AG04450 (cell line): ENCODE measurements at regions of chr3 and their contacts with region 1.

Region 1: DNA sequence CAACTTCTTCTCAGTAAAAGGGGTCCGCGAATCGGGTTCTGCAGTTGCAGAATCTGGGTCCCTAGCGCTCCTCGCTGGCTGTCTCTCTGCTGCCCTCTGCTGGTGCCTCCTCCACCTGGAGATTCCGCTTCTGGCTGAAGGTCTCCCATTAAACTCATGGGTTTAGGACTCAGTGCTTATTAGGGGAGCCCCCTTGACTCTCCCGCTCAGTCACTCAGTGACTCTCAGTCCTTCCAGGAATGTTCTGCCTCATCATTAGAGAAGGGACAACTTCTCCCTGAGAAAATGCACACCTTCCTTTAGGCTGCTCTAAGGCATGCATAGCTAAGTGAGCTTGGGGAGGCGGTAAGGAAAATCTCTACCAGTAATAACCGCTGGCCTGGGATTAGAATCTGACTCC is 7.1 kb downstream of the CPN2 start:
- DNase-seq: no peak
- H3K4me3 ChIP-seq: no peak overlapping the region
- H3K27ac ChIP-seq: no peak overlapping the region
- H3K27me3 ChIP-seq: no peaks in the 10 kb centered on the region
- CTCF ChIP-seq: peak; percentile 98

Region 2: GRCh38 chr3:193910886-193911738 is 432.9 kb before region 1 on chr3:
- CTCF ChIA-PET with region 1: no interaction called
- POLR2A ChIA-PET with region 1: no interaction called
- DNase-seq: no peak
- H3K4me3 ChIP-seq: no peak overlapping the region
- H3K27ac ChIP-seq: no peak overlapping the region
- H3K27me3 ChIP-seq: peaks cover 39% of the 10 kb centered on the region
- CTCF ChIP-seq: no peak

Region 3: GRCh38 chr3:194166682-194167479 is 177.1 kb before region 1 on chr3:
- CTCF ChIA-PET with region 1: no interaction called
- POLR2A ChIA-PET with region 1: no interaction called
- DNase-seq: no peak
- H3K4me3 ChIP-seq: no peak overlapping the region
- H3K27ac ChIP-seq: no peak overlapping the region
- H3K27me3 ChIP-seq: peaks cover 56% of the 10 kb centered on the region
- CTCF ChIP-seq: no peak

Region 4: GRCh38 chr3:194328053-194328657 is 15.9 kb before region 1 on chr3:
- CTCF ChIA-PET with region 1: interaction called, 55 read pairs
- POLR2A ChIA-PET with region 1: no interaction called
- DNase-seq: no peak
- H3K4me3 ChIP-seq: no peak overlapping the region
- H3K27ac ChIP-seq: no peak overlapping the region
- H3K27me3 ChIP-seq: no peaks in the 10 kb centered on the region
- CTCF ChIP-seq: no peak

Region 5: GRCh38 chr3:194364652-194365434 is 20.8 kb after region 1 on chr3:
- CTCF ChIA-PET with region 1: interaction called, 151 read pairs
- POLR2A ChIA-PET with region 1: no interaction called
- DNase-seq: peak; percentile 66
- H3K4me3 ChIP-seq: 0 out of 2 replicates have a peak overlapping the region, but pooled peaks have one; percentile 10
- H3K27ac ChIP-seq: peak overlapping the region; percentile 90
- H3K27me3 ChIP-seq: peaks cover 5% of the 10 kb centered on the region
- CTCF ChIP-seq: no peak

Region 6: DNA sequence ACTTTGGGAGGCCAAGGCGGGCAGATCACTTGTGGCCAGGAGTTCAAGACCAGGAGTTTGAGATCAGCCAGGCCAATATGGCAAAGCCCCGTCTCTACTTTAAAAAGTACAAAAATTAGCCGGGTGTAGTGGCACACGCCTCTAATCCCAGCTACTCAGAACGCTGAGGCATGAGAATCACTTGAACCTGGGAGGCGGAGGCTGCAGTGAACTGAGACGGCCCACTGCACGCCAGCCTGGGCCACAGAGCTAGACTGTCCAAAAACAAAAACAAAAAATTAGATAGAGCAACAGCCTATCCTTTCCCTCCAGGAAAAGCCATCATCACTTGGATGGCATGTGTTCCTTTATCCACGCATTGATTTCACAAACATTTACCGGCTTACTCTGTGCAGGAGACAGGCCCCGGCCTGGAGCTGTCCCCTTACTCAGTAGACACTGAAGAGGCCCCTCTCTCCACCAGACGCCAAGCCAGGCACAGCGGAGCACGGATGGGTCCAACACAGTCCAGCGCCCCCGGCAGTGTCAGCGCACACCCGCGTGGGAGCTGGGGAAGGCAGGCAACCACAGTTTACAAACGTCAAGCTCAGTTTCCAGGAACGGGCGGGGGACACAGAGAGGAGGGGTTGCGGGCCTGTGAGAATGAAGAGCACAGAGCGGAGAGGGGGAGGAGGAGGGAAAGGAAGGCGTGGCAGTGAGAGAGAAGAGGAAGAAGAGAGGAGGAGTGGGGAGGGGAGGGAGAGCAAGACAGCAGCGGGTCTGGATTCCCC is 52.0 kb after region 1 on chr3:
- CTCF ChIA-PET with region 1: interaction called, 69 read pairs
- POLR2A ChIA-PET with region 1: interaction called, 4 read pairs
- DNase-seq: no peak
- H3K4me3 ChIP-seq: no peak overlapping the region
- H3K27ac ChIP-seq: peak overlapping the region; percentile 21
- H3K27me3 ChIP-seq: peaks cover 23% of the 10 kb centered on the region
- CTCF ChIP-seq: no peak

Region 7: GRCh38 chr3:194465920-194466570 is 122.0 kb after region 1 on chr3:
- CTCF ChIA-PET with region 1: interaction called, 15 read pairs
- POLR2A ChIA-PET with region 1: no interaction called
- DNase-seq: no peak
- H3K4me3 ChIP-seq: no peak overlapping the region
- H3K27ac ChIP-seq: no peak overlapping the region
- H3K27me3 ChIP-seq: no peaks in the 10 kb centered on the region
- CTCF ChIP-seq: no peak

Region 8: DNA sequence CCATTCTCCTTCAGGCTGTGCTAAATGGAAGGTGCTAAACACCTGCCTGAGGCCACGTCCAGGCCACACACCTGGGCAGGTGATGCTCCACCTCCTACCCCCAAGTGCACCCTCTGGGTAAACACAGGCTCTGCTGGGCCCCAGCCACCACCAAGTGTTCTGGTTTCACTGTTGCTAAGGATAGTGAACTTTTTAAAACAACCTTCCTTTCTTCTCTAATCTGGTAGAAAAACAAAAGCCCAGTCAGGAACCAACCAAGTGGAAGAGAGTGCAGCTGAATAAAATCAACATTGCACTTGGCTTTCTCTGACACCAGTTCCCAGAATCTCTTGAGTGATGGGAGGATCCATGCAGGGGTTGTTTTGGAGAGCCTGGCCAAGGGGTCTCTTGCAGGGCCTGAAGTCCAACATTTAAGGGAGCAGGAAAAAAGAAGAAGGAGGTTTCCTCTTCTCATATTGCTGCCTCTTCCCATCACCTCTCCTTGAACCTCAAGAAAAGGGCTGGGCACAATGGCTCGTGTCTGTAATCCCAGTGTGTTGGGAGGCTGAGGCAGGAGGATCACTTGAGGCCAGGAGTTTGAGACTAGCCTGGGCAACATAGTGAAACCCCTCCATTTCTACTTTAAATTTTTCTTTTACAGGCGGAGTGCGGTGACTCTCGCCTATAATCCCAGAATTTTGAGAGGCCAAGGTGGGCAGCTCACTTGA is 169.0 kb after region 1 on chr3:
- CTCF ChIA-PET with region 1: no interaction called
- POLR2A ChIA-PET with region 1: no interaction called
- DNase-seq: no peak
- H3K4me3 ChIP-seq: no peak overlapping the region
- H3K27ac ChIP-seq: no peak overlapping the region
- H3K27me3 ChIP-seq: no peaks in the 10 kb centered on the region
- CTCF ChIP-seq: no peak

Region 9: DNA sequence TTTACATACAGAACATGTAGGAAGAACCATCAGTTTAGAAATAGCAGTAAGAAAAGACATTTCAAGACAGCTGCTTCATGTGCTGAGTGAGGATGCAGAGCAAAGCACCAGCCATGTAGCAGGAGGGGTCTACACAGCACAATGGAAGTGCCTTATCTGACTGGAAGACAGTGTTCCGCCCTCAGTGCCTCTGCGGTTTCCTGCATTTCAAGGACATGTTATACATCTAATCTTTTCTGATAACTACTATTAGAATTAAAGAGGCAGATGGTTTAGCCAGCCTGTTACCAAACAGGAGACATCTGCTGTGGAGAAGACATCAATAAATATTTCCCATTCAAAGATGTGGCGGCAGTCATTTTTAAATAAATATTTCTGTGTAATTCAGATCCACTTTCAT is 317.4 kb after region 1 on chr3:
- CTCF ChIA-PET with region 1: no interaction called
- POLR2A ChIA-PET with region 1: no interaction called
- DNase-seq: no peak
- H3K4me3 ChIP-seq: no peak overlapping the region
- H3K27ac ChIP-seq: no peak overlapping the region
- H3K27me3 ChIP-seq: no peaks in the 10 kb centered on the region
- CTCF ChIP-seq: no peak